ENCODE measurements at regions of chr6 and their contacts with region 1.

Region 1: DNA sequence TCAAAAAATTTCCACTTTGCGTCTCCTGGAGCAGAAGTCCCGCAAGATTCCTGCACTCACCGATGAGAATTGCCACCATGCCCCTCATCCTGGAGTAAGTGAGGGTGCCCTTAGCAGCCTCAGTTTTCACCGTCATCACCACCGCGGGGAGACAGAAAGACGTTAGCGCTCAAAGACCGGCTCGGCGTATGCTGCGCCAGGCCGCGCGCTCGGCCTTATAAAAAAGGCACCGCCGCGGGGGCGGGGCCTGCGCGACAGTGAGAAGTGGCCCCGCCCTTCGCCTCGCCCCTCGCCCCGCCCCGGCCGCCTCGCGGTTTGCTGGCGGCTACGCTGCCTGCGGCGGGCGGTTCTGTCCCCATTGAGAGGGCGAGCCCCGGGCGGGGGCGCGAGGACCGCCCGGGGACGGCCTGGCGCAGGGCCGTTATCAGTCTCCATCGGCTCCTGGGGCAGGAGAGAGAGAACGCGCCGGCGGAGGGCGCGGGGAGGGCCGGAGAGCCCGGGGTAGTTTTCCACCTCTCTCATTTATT is 122.3 kb upstream of the SLC2A12 start:
- DNase-seq: peak; percentile 97
- ATAC-seq: peak; percentile 75
- H3K4me3 Mint-ChIP-seq: peak overlapping the region; percentile 99
- H3K27ac Mint-ChIP-seq: peak overlapping the region; percentile 98
- H3K4me1 Mint-ChIP-seq: peaks cover 55% of the 10 kb centered on the region
- H3K27me3 Mint-ChIP-seq: no peaks in the 10 kb centered on the region

Region 2: GRCh38 chr6:134063966-134064445 is 110.7 kb before region 1 on chr6:
- POLR2A ChIA-PET with region 1: no interaction called
- DNase-seq: peak; percentile 30
- ATAC-seq: peak; percentile 85
- H3K4me3 Mint-ChIP-seq: no peak overlapping the region
- H3K27ac Mint-ChIP-seq: no peak overlapping the region
- H3K4me1 Mint-ChIP-seq: peaks cover 4% of the 10 kb centered on the region
- H3K27me3 Mint-ChIP-seq: peaks cover 3% of the 10 kb centered on the region

Region 3: DNA sequence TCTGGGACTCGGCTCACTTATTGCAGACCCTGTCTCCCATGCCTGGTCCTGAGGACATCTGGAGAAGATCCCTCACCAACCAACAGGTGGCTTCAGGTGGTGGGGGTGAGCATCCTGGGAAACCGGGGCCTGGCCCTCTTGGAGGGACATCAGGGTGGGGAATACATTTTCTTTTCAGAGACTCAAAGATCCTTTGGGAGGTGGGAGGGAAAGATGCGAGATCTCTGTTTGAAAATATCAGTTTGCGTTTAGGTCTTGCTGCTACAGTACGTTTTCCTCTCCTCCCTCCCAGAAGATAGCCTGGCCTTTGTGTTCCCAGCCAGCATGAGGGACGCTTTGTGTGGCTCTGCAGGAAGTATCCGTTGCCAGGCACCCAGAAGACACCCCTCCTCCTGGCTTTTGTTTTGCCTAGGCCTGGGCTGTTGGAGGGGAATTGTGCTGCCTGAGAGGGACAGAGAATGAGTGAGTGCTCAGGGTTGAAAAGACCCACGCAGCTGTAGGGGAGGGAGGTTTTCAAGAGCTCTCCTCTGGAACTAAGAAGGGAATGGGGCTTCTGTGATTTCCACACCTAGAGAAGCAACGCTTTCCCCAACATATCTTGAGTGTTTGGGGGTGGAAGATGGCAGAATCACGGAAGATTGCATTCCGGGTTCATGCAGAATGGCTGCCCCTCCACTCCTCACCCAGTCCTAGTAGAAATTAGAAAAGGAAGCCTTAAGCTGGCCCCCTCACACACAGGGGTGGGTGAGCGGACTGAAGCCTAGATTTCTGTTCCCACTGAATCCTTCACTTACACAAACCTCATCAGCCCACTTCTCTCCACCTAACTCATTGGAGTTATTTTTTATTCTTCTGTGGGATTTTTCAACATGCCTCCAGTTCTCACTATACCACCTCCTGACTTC is 100.3 kb before region 1 on chr6:
- POLR2A ChIA-PET with region 1: no interaction called
- DNase-seq: no peak
- ATAC-seq: no peak
- H3K4me3 Mint-ChIP-seq: no peak overlapping the region
- H3K27ac Mint-ChIP-seq: no peak overlapping the region
- H3K4me1 Mint-ChIP-seq: peaks cover 11% of the 10 kb centered on the region
- H3K27me3 Mint-ChIP-seq: no peaks in the 10 kb centered on the region

Region 4: DNA sequence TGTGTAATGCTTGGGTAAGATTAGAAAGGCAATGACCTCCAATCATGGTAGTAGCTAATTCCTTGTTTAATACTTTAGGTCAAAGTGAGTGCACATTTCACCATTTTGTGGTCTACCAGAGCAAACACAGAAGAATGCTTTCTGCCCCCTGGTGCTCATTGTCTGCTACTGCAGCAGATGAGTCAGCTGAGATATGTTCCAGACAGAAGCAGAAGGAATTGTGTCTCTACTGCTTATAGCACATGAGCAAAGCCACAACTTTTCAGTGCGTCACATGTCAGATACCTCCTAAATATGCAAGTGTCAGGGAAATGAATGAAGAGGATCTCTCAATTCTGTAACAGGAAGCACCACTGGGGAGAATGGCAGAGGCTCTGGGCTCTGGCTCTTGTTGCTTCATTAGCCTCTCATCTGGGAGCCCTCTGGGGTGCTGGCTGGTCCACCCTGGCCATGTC is 466.3 kb after region 1 on chr6:
- POLR2A ChIA-PET with region 1: interaction called, 12 read pairs
- DNase-seq: peak; percentile 60
- ATAC-seq: peak; percentile 81
- H3K4me3 Mint-ChIP-seq: no peak overlapping the region
- H3K27ac Mint-ChIP-seq: no peak overlapping the region
- H3K4me1 Mint-ChIP-seq: peaks cover 20% of the 10 kb centered on the region
- H3K27me3 Mint-ChIP-seq: peaks cover 2% of the 10 kb centered on the region

Measured in activated naive CD8-positive, alpha-beta T cell treated with anti-CD3 and anti-CD28 coated beads, Interleukin-2, amount 10 ng/mL, durations not matched to agents 7 days and 5 days (primary cell).